B cell (primary cell): ENCODE measurements at regions of chr9 and their contacts with region 1.

Region 1: GRCh38 chr9:5450359-5451091 is at the start of gene CD274:
- DNase-seq: peak; percentile 85
- ATAC-seq: peak; percentile 91
- H3K4me3 ChIP-seq: peak within 1 kb of the TSS; percentile 75 to 93 (median 81)
- H3K4me3 Mint-ChIP-seq: peak within 1 kb of the TSS; percentile 83
- H3K27ac ChIP-seq: peak within 1 kb of the TSS; percentile 72 to 83
- H3K27ac Mint-ChIP-seq: peak within 1 kb of the TSS; percentile 94
- H3K4me1 ChIP-seq: peaks cover 21 to 30% of the 10 kb centered on the region in 2 donors
- H3K4me1 Mint-ChIP-seq: peaks cover 49% of the 10 kb centered on the region
- H3K27me3 ChIP-seq: no peaks in the 10 kb centered on the region
- H3K27me3 Mint-ChIP-seq: no peaks in the 10 kb centered on the region
- CTCF ChIP-seq: peak; percentile 57
- total RNA-seq, gene CD274: 5.2 and 7.0 TPM in 2 replicates

Region 2: GRCh38 chr9:5510360-5510931 is 59.9 kb after region 1 on chr9 and contains the start of gene PDCD1LG2:
- CTCF ChIA-PET with region 1: interaction called, 3 read pairs
- POLR2A ChIA-PET with region 1: no interaction called
- intact Hi-C with region 1: loop called (anchors 5 kb)
- DNase-seq: peak; percentile 58
- ATAC-seq: peak; percentile 45
- H3K4me3 ChIP-seq: peak within 1 kb of the TSS in 2 of 5 experiments; percentile 18 to 35
- H3K4me3 Mint-ChIP-seq: peak within 1 kb of the TSS; percentile 86
- H3K27ac ChIP-seq: peak within 1 kb of the TSS; percentile 23 to 54
- H3K27ac Mint-ChIP-seq: peak within 1 kb of the TSS; percentile 89
- H3K4me1 ChIP-seq: peaks cover 20 to 33% of the 10 kb centered on the region in 2 donors
- H3K4me1 Mint-ChIP-seq: peaks cover 43% of the 10 kb centered on the region
- H3K27me3 ChIP-seq: no peaks in the 10 kb centered on the region
- H3K27me3 Mint-ChIP-seq: no peaks in the 10 kb centered on the region
- CTCF ChIP-seq: no peak
- total RNA-seq, gene PDCD1LG2: 0.49 and 0.67 TPM in 2 replicates

Region 3: DNA sequence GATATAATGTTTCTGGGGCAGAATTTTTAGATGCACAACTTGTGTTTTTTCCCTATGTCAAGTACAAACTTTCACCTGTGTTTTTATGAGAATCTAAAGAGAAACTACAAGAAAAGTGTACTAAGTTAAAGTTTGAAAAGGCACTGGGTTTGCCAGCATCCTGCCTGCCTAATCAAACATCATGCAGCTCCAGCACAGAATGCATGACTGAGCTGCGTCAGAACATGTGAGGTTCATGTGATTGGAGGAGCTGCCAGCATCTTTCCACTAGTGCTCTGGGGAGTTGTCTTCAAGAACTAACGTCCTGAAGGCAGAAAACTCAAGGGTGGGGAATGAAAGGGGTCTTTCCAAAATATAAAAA is 132.3 kb after region 1 on chr9:
- CTCF ChIA-PET with region 1: interaction called, 45 read pairs
- POLR2A ChIA-PET with region 1: no interaction called
- intact Hi-C with region 1: loop called (anchors 2 kb)
- DNase-seq: peak; percentile 85
- ATAC-seq: peak; percentile 76
- H3K4me3 ChIP-seq: no peak overlapping the region
- H3K4me3 Mint-ChIP-seq: peak overlapping the region; percentile 67
- H3K27ac ChIP-seq: peak overlapping the region; percentile 53 to 75
- H3K27ac Mint-ChIP-seq: peak overlapping the region; percentile 92
- H3K4me1 ChIP-seq: peaks cover 25% of the 10 kb centered on the region in 2 donors
- H3K4me1 Mint-ChIP-seq: peaks cover 60% of the 10 kb centered on the region
- H3K27me3 ChIP-seq: no peaks in the 10 kb centered on the region
- H3K27me3 Mint-ChIP-seq: no peaks in the 10 kb centered on the region
- CTCF ChIP-seq: no peak

Region 4: GRCh38 chr9:5608298-5609225 is 158.0 kb after region 1 on chr9:
- CTCF ChIA-PET with region 1: interaction called, 11 read pairs
- POLR2A ChIA-PET with region 1: no interaction called
- intact Hi-C with region 1: no loop called
- DNase-seq: peak; percentile 52
- ATAC-seq: peak; percentile 78
- H3K4me3 ChIP-seq: peak overlapping the region in 4 of 5 experiments; percentile 25 to 64 (median 49)
- H3K4me3 Mint-ChIP-seq: peak overlapping the region; percentile 89
- H3K27ac ChIP-seq: peak overlapping the region; percentile 8 to 74
- H3K27ac Mint-ChIP-seq: peak overlapping the region; percentile 92
- H3K4me1 ChIP-seq: peaks cover 12 to 14% of the 10 kb centered on the region in 2 donors
- H3K4me1 Mint-ChIP-seq: peaks cover 37% of the 10 kb centered on the region
- H3K27me3 ChIP-seq: no peaks in the 10 kb centered on the region
- H3K27me3 Mint-ChIP-seq: no peaks in the 10 kb centered on the region
- CTCF ChIP-seq: no peak

Region 5: GRCh38 chr9:5832543-5833529 is 382.3 kb after region 1 on chr9 and contains the start of gene ERMP1:
- CTCF ChIA-PET with region 1: interaction called, 6 read pairs
- POLR2A ChIA-PET with region 1: interaction called, 3 read pairs
- intact Hi-C with region 1: loop called (anchors 2 kb)
- DNase-seq: peak; percentile 93
- ATAC-seq: peak; percentile 89
- H3K4me3 ChIP-seq: peak within 1 kb of the TSS; percentile 63 to 83 (median 75)
- H3K4me3 Mint-ChIP-seq: peak within 1 kb of the TSS; percentile 95
- H3K27ac ChIP-seq: peak within 1 kb of the TSS in 1 of 2 donors; percentile 50
- H3K27ac Mint-ChIP-seq: peak within 1 kb of the TSS; percentile 93
- H3K4me1 ChIP-seq: peaks cover 19 to 25% of the 10 kb centered on the region in 2 donors
- H3K4me1 Mint-ChIP-seq: peaks cover 37% of the 10 kb centered on the region
- H3K27me3 ChIP-seq: no peaks in the 10 kb centered on the region
- H3K27me3 Mint-ChIP-seq: no peaks in the 10 kb centered on the region
- CTCF ChIP-seq: peak; percentile 96
- total RNA-seq, gene ERMP1: 10.6 and 12.8 TPM in 2 replicates